ENCODE measurements at regions of chr2 and their contacts with region 1.

Region 1: DNA sequence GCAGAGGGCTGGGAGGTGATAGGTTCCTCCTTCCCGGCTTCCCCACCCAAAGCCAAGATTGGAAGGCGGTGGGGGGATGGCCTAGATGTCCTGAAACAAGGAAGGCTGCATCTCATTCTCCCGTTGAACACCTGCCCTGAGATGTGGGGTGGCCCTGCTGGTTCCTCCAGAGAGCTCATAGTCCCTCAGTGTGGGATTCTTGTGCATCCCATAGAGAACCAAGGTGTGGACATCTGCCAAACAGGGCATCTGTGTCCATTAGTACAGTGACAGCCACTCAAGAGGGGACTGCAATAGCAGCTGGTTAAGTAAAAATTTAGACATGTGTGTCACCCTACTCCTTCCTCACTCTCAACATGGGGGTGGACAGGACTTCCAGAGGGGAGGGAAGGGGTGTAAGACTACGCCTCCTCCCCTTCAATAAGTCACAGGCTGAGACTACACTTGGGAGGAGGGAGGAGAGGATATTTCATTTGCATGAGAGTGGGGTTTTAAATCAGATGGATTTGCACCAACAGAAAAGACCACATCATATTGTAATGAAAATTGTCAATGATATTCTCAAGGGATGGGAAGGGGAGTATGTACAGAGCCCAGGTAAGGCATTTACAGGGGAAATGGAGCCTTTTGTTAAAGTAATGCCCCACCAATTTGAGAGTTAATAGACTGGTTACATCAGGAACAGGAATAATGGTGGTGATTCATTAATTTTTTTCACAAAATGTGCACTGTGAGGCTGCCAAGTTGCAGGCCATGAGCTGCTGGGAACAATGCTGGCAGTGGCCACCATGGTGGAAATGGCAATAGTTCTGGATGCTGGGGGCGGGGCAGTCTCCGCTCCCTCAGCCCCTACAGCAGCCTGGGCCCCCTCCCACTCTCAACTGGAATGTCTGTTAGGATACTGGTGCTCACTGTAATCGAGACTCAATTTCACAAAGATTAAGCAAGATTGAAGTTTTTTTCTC is 80.6 kb downstream of the TEX51 start:
- DNase-seq: no peak
- ATAC-seq: no peak
- H3K4me3 ChIP-seq: no peak overlapping the region
- H3K27ac ChIP-seq: no peak overlapping the region
- H3K4me1 ChIP-seq: peaks cover 65% of the 10 kb centered on the region
- H3K27me3 ChIP-seq: no peaks in the 10 kb centered on the region
- CTCF ChIP-seq: no peak
- EP300 ChIP-seq: no peak
- POLR2A ChIP-seq: no peak
- RAD21 ChIP-seq: no peak

Region 2: GRCh38 chr2:126945118-126945517 is 34.2 kb before region 1 on chr2:
- CTCF ChIA-PET with region 1: no interaction called
- POLR2A ChIA-PET with region 1: no interaction called
- in situ Hi-C with region 1: no loop called
- intact Hi-C with region 1: no loop called
- DNase-seq: no peak
- ATAC-seq: no peak
- H3K4me3 ChIP-seq: no peak overlapping the region
- H3K27ac ChIP-seq: no peak overlapping the region
- H3K4me1 ChIP-seq: no peaks in the 10 kb centered on the region; the same call in 1 of the 2 replicates
- H3K27me3 ChIP-seq: no peaks in the 10 kb centered on the region; a peak in 1 of 5 replicates
- CTCF ChIP-seq: no peak
- EP300 ChIP-seq: no peak
- POLR2A ChIP-seq: no peak
- RAD21 ChIP-seq: no peak

Region 3: DNA sequence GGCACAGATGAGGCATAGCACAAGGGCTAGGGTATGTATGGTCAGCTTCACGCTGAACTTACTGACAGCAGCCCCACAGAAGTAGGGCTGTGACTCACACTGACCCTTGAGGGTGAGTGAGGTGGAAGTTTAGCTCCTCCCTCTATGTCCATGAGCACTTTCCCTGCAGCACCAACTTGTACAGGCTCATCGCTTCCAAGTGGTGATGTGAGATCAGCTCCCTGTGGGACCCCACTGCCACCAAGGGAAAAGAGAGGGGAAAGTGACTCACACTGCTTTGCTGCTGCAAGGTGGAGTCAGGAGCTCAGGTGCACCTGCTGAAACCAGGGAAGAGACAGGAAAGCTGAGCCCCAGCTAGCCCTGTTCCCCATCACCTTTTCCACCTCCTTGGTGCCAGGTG is 10.9 kb after region 1 on chr2:
- CTCF ChIA-PET with region 1: no interaction called
- POLR2A ChIA-PET with region 1: interaction called, 16 read pairs
- in situ Hi-C with region 1: no loop called
- intact Hi-C with region 1: no loop called
- DNase-seq: peak; percentile 15
- ATAC-seq: peak; percentile 76
- H3K4me3 ChIP-seq: peak overlapping the region in 1 of 3 experiments; percentile 60; a peak in 2 of 6 replicates
- H3K27ac ChIP-seq: peak overlapping the region; percentile 84
- H3K4me1 ChIP-seq: peaks cover 95% of the 10 kb centered on the region
- H3K27me3 ChIP-seq: no peaks in the 10 kb centered on the region
- CTCF ChIP-seq: no peak
- EP300 ChIP-seq: no peak
- POLR2A ChIP-seq: 0 out of 4 replicates have a peak, but pooled peaks of 1 of the 2 experiments have one; percentile 20
- RAD21 ChIP-seq: no peak

Region 4: DNA sequence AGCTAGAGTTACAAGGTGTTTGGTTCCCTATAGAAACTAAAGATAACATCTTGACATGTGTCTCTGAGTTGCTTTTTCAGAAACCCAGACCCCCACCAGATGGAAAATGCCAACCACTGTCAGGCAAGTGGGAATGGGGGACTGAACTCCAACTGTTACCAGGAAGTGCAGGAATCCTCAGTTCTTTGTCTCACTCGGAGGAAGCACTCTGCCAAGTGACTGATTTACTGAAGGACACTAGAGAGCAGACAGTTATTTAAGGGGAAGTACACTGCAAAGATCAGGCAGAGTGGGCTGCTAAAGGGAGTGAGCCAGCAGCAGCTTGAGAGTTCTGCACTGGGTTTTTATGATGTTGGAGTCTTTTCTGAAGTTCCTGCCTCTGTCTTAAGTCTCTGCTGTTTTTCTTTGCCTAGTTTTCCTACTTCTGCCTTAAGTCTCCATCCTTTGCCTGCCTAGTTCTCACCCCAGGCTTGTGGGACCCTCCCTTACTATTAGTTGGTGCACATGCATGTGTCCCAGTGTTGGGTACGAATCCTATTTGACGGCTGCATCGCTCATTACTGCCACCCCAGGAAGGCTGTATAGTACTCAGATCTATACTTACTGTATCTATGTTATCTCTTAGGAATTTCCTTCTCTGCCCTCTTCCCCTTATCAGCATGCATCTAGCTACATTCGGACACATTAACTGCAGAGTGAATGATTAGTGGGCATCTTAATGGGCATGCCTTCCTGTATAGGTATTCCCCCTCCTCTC is 16.5 kb after region 1 on chr2:
- CTCF ChIA-PET with region 1: no interaction called
- POLR2A ChIA-PET with region 1: interaction called, 16 read pairs
- in situ Hi-C with region 1: no loop called
- intact Hi-C with region 1: loop called (anchors 2 kb)
- DNase-seq: peak; percentile 33
- ATAC-seq: peak; percentile 10
- H3K4me3 ChIP-seq: peak overlapping the region in 1 of 3 experiments; percentile 44; a peak in 1 of 6 replicates
- H3K27ac ChIP-seq: peak overlapping the region; percentile 90
- H3K4me1 ChIP-seq: peaks cover 85% of the 10 kb centered on the region
- H3K27me3 ChIP-seq: no peaks in the 10 kb centered on the region
- CTCF ChIP-seq: peak; percentile 42
- EP300 ChIP-seq: no peak
- POLR2A ChIP-seq: peak in 1 of 2 experiments; percentile 42; a peak in 1 of 4 replicates
- RAD21 ChIP-seq: no peak; the same call in 1 of the 2 replicates